Mucosa of descending colon (tissue), 3 donors: ENCODE measurements at regions of chr19 and their contacts with region 1.

Region 1: DNA sequence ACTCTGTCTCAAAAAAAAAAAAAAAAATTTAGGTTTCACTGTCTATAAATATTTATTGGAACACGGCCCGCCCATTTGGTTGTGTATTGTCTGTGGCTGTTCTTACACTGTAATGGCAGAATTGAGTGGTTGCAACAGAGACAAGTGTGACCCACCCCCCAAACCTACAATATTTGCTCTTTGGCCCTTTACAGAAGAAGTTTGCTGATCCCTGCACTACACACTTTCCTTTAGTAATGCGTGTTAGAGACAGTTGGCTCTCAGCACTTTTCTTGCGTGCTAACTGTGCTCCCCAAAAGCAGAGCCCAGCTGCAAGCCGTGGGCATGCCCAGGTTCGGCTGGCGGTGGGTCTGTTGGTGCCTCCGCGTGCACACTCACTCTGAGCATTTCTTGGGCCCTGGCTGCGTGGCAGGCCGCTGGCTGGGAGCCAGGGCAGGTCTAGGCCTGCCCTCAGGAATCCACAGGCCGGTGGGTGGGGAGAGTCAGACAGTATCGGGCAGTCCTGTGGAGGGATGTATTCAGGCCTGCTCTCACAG is 72.6 kb downstream of the SIPA1L3 start:
- DNase-seq: peak in 2 of 3 donors; percentile 51 to 66
- ATAC-seq: peak; percentile 49
- H3K4me3 ChIP-seq: no peak overlapping the region
- H3K4me1 ChIP-seq: peaks cover 40% of the 10 kb centered on the region
- CTCF ChIP-seq: no peak

Region 2: GRCh38 chr19:37817180-37817981 is 162.2 kb before region 1 on chr19:
- intact Hi-C with region 1: no loop called
- DNase-seq: peak; percentile 64 to 84 (median 65)
- ATAC-seq: peak; percentile 79
- H3K4me3 ChIP-seq: peak overlapping the region; percentile 2
- H3K4me1 ChIP-seq: no peaks in the 10 kb centered on the region
- CTCF ChIP-seq: no peak

Region 3: GRCh38 chr19:37906869-37907734 is 72.5 kb before region 1 on chr19 and contains the start of gene SIPA1L3:
- intact Hi-C with region 1: loop called in 1 of 2 experiments (anchors 10 kb)
- DNase-seq: peak; percentile 97
- ATAC-seq: peak; percentile 96
- H3K4me3 ChIP-seq: peak within 1 kb of the TSS; percentile 86
- H3K4me1 ChIP-seq: peaks cover 14% of the 10 kb centered on the region
- CTCF ChIP-seq: no peak
- total RNA-seq, gene SIPA1L3: 93.6 to 173 (median 144) TPM

Region 4: DNA sequence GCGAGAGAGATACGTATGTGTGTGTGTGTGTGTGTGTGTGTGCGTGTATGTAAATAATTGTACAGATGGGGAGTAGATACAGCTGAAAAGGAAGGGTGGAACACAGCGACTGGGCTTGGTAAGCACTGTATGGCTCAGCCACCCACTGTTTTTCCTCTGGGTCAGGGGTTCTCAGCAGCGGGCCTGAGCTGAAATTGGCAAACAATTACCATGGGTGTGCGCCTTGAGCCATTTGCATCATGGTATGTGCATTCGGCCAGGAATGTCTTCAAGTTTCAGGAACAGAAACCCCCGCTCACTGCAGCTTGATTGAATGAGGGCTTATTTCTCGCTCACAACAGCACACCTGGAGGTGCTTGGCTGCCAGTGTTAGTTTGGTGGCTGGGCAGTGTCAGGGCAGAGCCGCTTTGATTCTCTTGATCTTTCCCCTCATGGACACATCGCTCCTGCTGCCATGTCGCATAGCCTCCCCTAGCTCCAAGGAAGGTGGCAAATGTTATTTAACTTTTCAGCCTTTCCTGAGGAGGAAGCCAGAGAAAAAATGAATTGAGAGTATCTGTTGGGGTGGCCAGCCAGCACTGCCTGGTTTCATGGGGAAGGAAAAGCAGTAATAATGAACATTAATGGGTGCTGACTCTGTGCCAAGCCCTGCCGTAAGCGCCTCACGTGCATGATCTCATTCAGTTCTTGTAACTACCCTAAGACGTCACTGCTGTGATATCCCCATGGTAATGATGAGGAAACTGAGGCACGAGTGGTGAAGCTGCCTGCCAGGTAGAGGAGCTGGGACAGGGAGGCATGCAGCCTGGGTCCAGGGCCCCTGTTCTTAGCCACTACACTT is 54.3 kb after region 1 on chr19:
- intact Hi-C with region 1: no loop called
- DNase-seq: peak in 1 of 3 donors; percentile 32
- ATAC-seq: peak; percentile 68
- H3K4me3 ChIP-seq: no peak overlapping the region
- H3K4me1 ChIP-seq: no peaks in the 10 kb centered on the region
- CTCF ChIP-seq: no peak